Cardiac septum (tissue), 1 donor: ENCODE measurements at regions of chr6 and their contacts with region 1.

Region 1: GRCh38 chr6:116010790-116011401 is 49.8 kb downstream of the FRK start:
- DNase-seq: no peak

Region 2: DNA sequence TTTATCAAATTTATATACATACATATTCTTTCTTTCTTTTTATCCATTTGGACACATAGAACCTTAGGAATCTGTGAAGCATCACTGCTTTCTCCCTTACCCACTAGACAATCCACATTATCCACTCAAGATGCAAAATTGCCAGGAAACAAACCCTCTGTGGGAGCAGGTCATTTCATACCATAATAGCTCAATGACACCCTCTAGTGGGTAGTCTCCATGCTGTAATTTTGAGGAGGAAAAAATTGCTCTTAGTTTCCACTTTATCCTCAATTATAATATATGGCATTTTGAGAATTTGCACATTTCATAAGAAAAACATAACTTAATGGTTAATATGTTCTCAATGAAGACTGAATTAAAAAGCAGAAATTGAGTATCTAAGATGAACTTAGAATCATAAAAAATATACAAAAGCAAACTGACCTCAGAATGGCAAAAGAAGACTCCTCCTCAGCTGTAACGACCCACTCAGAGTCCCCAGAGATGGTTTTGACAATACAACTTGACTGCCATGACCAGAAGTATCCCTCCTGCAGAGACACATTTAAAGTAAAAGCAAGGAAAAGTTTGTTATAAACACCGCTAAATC is 114.3 kb before region 1 on chr6:
- intact Hi-C with region 1: no loop called
- DNase-seq: no peak

Region 3: DNA sequence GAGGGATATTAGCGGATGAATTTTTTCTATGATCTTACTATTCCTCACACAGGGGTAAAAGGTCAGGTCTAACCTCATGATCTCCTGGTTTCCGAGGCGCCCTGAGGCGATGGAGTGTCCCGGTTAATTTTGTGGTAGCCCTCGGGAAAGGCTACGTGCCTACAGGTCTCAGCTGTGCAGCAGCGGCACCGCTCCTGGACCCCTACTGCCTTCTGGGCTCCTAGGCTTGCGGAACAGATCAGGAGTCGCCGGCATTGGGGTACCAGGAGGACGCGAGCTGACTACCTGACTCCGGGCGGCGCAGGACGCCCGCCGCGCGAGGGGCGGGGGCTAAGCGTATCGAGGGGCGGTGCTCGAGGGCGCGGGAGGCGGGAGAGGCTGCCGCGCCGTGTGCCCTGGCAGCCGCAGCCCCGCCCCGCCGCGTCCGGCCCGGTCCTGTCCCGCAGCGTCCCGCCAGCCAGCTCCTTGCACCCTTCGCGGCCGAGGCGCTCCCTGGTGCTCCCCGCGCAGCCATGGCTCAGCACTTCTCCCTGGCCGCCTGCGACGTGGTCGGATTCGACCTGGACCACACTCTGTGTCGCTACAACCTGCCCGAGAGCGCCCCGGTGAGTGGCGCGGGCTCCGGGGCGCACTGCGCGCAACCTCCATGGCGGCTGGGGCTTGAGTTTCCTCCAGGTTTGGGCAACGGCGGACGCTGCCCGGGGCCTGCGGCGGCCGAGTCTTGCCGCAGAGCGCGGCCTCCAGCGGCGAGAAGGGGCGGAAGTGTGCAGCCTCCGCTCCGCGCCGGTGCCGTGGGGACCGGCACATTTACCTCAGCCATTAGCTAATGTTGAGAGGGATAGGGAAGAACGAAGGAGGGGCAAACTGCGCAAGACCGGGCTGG is 89.8 kb after region 1 on chr6 and contains the start of gene NT5DC1:
- intact Hi-C with region 1: loop called (anchors 2 kb)
- DNase-seq: peak; percentile 92
- total RNA-seq, gene NT5DC1: 38.8 TPM